ENCODE measurements at regions of chr17 and their contacts with region 1.

Region 1: DNA sequence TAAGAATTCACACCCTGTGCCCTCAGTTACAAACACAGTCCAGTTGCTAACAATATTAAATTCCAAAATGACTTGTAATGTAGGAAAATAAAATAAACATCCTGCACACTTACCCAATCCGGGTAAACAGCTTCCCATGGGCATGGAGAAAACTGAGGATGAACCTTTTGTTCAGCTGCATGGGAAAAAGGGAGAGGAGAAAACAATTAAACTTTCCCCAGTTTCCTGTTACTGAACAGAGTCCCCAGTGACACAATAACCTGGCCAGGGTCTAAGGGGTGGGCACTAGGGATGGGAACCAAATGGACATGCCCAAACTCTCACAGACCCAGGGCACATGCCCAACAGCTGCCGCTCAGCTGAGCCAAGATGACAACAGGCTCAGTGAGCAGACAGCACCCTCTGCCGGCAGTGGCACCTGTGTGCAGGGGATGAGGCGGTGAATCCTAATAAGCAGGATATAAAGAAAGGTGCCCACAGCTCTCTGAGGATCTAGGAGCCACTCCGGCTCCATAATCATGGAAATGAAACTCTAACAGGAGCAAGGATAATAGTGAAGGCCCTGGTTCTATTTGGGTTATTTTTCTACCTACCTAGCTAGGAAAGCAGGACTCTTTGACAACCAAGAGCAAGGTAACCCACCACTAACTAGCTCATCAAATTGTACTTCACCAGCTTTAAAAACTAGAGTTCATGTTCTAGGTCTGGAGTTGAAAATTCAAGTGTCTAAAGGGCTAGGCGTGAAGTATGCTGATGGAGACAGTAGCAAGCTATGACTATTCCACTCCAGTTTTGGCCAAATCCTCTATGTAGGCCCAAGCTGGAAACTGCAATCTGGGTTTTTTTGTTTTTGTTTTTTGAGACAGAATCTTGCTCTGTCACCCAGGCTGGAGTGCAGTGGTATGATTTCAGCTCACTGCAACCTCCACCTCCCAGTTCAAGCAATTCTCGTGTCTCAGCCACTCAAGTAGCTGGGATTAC is 58.8 kb downstream of the SMG6 start:
- DNase-seq: peak; percentile 91

Region 2: DNA sequence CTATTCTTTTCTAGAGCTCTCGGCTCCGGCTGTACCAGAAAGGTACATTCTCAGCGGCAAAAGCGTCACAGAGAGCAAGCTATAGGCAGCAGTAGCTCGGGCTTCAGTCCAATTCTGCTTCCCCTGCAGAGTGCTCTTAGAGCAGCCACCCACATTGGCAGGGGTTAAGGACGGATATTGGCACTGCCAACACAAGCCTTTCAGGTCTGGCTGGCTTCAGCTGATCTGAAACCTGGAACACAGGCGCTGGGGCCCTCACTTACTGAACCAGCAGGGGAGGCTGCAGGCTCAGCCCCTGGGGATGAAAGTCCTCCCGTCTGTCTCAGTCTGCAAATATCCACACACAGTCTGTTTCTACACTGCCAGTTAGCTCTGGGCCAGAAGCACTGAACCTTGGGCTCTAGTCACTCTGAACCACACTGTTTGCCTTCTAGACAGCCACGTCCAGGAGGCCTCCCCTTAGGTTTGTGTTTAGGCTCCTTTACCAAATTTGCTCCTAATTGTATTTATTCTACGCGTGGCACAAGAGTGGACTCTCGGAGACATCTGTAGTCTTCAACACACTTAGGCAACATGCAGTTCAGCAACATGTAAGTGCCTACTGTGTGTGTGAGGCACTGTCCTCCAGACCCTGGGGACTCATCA is 149.8 kb before region 1 on chr17:
- intact Hi-C with region 1: loop called (anchors 2 kb)
- DNase-seq: peak; percentile 82

Region 3: GRCh38 chr17:2331303-2331702 is 86.5 kb after region 1 on chr17:
- intact Hi-C with region 1: no loop called
- DNase-seq: no peak

Measured in cardiac septum (tissue), 1 donor.